SK-N-SH (cell line): ENCODE measurements at regions of chr18 and their contacts with region 1.

Region 1: GRCh38 chr18:3771121-3771971 is 321.4 kb downstream of the TGIF1 start:
- DNase-seq: peak; percentile 86
- H3K4me3 ChIP-seq: peak overlapping the region; percentile 26 to 46
- H3K27ac ChIP-seq: no peak overlapping the region
- H3K4me1 ChIP-seq: peaks cover 0 to 4% of the 10 kb centered on the region in 2 experiments; a peak in 2 of 4 replicates
- H3K27me3 ChIP-seq: peaks cover 26% of the 10 kb centered on the region; the same call in 1 of the 2 replicates
- CTCF ChIP-seq: peak; percentile 89
- EP300 ChIP-seq: no peak; a peak in 1 of 4 replicates
- RAD21 ChIP-seq: peak; percentile 71

Region 2: GRCh38 chr18:3472681-3473544 is 298.4 kb before region 1 on chr18:
- CTCF ChIA-PET with region 1: no interaction called
- POLR2A ChIA-PET with region 1: no interaction called
- DNase-seq: no peak
- H3K4me3 ChIP-seq: no peak overlapping the region
- H3K27ac ChIP-seq: no peak overlapping the region
- H3K4me1 ChIP-seq: no peaks in the 10 kb centered on the region
- H3K27me3 ChIP-seq: no peaks in the 10 kb centered on the region
- CTCF ChIP-seq: no peak
- EP300 ChIP-seq: no peak
- RAD21 ChIP-seq: no peak

Region 3: DNA sequence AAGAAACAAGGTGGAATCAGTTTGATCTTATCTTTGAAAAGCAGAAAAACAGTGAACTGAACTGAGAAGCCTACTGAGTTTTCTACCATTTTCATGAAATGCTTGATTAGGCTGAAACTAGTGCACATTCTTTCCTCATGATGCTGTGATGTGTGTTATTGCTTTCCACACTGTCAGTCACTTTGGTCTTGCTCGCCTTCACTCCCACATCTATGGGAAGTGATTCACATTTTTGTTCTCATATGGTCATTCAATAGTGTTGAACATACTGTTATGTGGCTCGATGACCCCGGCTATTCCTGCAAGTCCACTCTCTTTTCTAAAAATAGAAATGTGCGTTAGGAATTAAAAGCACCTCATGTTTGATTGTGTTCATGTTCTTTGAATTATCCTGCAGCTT is 191.6 kb before region 1 on chr18:
- CTCF ChIA-PET with region 1: no interaction called
- POLR2A ChIA-PET with region 1: no interaction called
- DNase-seq: no peak
- H3K4me3 ChIP-seq: no peak overlapping the region
- H3K27ac ChIP-seq: peak overlapping the region in 1 of 2 experiments; percentile 58; a peak in 2 of 4 replicates
- H3K4me1 ChIP-seq: peaks cover 0 to 6% of the 10 kb centered on the region in 2 experiments; a peak in 2 of 4 replicates
- H3K27me3 ChIP-seq: no peaks in the 10 kb centered on the region
- CTCF ChIP-seq: no peak
- EP300 ChIP-seq: no peak
- RAD21 ChIP-seq: no peak

Region 4: DNA sequence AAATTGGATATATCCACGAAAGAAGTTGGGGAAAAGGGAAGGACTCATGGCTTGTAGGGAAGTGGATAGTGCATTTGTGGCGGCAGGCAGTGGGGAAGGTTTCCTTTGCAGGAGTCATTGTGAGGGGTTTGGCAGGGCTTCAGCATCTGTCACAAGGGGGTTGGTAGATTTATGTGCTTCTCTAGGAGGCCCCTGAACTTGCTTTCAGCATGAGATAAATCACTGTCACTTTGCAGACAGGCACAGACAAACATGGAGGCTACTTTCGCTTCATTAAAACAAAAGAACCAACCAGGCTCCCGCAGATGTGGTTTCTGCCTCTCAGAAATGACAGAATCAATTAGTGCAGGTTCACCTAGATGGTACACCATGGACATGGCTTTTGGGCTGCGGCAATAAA is 19.4 kb after region 1 on chr18:
- CTCF ChIA-PET with region 1: interaction called, 15 read pairs
- POLR2A ChIA-PET with region 1: no interaction called
- DNase-seq: no peak
- H3K4me3 ChIP-seq: no peak overlapping the region; a peak in 1 of 4 replicates
- H3K27ac ChIP-seq: peak overlapping the region in 1 of 2 experiments; percentile 13; a peak in 1 of 4 replicates
- H3K4me1 ChIP-seq: peaks cover 0 to 5% of the 10 kb centered on the region in 2 experiments; a peak in 1 of 4 replicates
- H3K27me3 ChIP-seq: no peaks in the 10 kb centered on the region
- CTCF ChIP-seq: no peak
- EP300 ChIP-seq: peak in 1 of 2 experiments; percentile 64; a peak in 1 of 4 replicates
- RAD21 ChIP-seq: no peak

Region 5: GRCh38 chr18:3877678-3878077 is 106.3 kb after region 1 on chr18:
- CTCF ChIA-PET with region 1: no interaction called
- POLR2A ChIA-PET with region 1: no interaction called
- DNase-seq: no peak
- H3K4me3 ChIP-seq: no peak overlapping the region
- H3K27ac ChIP-seq: no peak overlapping the region
- H3K4me1 ChIP-seq: no peaks in the 10 kb centered on the region; a peak in 1 of 4 replicates
- H3K27me3 ChIP-seq: peaks cover 34% of the 10 kb centered on the region; the same call in 1 of the 2 replicates
- CTCF ChIP-seq: no peak
- EP300 ChIP-seq: no peak
- RAD21 ChIP-seq: no peak